CD4-positive, alpha-beta memory T cell (primary cell): ENCODE measurements at regions of chr22 and their contacts with region 1.

Region 1: DNA sequence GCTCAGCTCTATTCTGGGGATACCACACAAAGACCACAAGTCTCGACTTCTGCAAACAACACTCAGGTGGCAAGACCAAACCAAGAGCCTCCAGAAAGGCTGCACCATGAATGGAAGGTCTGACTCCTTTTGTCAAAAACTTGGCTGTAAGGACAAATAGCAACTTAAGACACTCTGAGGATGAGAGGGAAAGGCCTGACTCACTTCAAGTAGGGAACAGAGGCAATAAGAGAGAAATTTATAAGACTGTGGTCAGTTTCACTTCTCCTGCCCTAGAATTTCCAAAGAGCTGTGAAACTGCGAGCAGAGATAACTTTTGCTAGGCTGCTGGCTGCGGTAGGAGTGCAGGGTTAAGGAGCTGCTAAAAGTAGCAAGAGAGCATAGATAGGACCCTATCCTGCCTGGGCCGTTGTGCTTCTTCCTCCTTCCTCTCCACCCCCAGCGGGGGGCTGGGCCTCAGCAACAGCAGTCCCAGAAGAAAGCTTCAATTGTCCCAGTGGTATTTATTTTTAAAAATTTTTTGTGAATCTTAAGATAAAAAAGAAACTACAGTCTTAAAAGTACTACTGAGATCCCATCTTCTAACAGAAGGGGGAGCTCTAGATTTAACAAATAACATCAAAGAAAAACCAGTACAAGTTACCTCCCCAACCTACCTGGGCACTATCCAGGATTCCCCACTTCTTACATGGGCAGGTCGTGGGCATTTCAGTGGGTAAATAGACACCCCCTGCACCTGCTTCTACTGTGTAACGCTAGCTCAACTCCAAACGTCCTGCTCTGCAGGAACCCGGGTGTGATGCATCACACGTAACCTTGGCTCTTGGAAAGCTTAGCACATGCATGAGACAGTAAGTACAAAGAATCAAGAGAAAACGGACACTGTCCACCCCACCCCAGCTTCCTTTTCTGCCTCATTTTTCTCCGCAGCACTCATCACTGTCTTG is 66.4 kb downstream of the SGSM3 start:
- DNase-seq: peak in 4 of 5 donors; percentile 60 to 66 (median 62)
- H3K4me3 ChIP-seq: no peak overlapping the region
- H3K4me3 Mint-ChIP-seq: peak overlapping the region in 2 of 8 donors; percentile 17 to 37
- H3K27ac ChIP-seq: no peak overlapping the region
- H3K27ac Mint-ChIP-seq: peak overlapping the region; percentile 43 to 71 (median 53)
- H3K4me1 ChIP-seq: peaks cover 23% of the 10 kb centered on the region
- H3K4me1 Mint-ChIP-seq: peaks cover 34 to 46% (median 41%) of the 10 kb centered on the region in 4 donors
- H3K27me3 ChIP-seq: no peaks in the 10 kb centered on the region
- H3K27me3 Mint-ChIP-seq: no peaks in the 10 kb centered on the region

Region 2: DNA sequence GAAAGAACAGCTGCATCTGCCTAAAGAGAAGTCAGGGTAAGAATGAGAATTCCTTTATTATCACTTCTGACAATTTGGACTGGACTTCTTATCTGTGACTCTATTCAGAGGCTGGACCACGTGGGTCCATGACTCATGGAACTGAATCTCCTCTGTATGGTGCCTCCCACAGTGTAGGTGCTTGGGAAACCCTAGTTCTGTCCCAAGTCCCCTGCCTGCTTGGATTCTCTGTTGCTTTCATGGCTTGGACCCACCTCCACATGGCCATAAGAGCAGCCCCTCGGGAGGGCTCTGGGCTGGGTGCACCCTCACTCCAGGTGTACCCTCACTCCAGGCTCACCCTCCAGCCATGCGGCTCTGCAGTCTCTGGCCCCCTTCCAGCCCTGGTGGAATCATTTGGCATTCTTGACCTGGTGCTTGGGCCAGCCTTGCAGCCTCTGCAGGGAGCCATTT is 712.9 kb before region 1 on chr22:
- CTCF ChIA-PET with region 1: no interaction called
- POLR2A ChIA-PET with region 1: no interaction called
- intact Hi-C with region 1: no loop called
- DNase-seq: no peak
- H3K4me3 ChIP-seq: no peak overlapping the region
- H3K4me3 Mint-ChIP-seq: no peak overlapping the region
- H3K27ac ChIP-seq: no peak overlapping the region
- H3K27ac Mint-ChIP-seq: no peak overlapping the region
- H3K4me1 ChIP-seq: no peaks in the 10 kb centered on the region
- H3K4me1 Mint-ChIP-seq: peaks cover 0 to 2% (median 0%) of the 10 kb centered on the region in 4 donors
- H3K27me3 ChIP-seq: no peaks in the 10 kb centered on the region
- H3K27me3 Mint-ChIP-seq: peaks cover 0 to 2% of the 10 kb centered on the region in 2 donors

Region 3: GRCh38 chr22:40426594-40427333 is 10.0 kb before region 1 on chr22:
- CTCF ChIA-PET with region 1: interaction called, 11 read pairs
- POLR2A ChIA-PET with region 1: no interaction called
- intact Hi-C with region 1: no loop called
- DNase-seq: no peak
- H3K4me3 ChIP-seq: no peak overlapping the region
- H3K4me3 Mint-ChIP-seq: no peak overlapping the region
- H3K27ac ChIP-seq: no peak overlapping the region
- H3K27ac Mint-ChIP-seq: peak overlapping the region in 6 of 7 donors; percentile 53 to 88 (median 72)
- H3K4me1 ChIP-seq: no peaks in the 10 kb centered on the region
- H3K4me1 Mint-ChIP-seq: peaks cover 9 to 22% (median 15%) of the 10 kb centered on the region in 4 donors
- H3K27me3 ChIP-seq: no peaks in the 10 kb centered on the region
- H3K27me3 Mint-ChIP-seq: no peaks in the 10 kb centered on the region

Region 4: DNA sequence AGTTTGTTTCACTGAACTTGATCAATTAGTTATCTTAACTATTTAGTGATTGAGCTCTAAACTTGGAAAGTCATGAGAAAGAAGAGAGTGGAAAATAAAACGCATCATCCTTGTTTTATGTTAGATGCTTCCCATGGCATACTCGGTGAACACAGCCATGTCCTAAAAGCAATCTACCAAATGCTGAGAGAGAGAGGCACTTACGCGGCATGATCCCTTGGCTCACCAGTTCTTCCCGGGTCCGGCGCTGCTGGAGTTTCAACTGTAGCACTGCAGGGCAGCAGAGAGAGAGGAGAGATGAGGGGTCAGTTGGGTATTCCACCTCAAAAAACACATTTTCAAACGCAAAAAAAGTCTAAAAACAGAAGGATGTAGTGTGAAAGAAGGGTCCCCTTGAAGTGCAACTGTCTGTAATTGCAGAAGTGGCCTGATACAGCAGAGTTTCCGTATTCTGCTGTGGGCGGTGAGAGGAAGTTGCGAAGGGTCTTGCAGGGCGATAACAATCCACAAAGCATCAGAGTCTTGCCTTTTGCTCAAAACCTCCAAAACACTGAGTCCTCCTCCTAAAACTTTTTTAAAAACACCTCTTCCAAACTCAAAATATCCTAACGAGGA is 26.3 kb after region 1 on chr22:
- CTCF ChIA-PET with region 1: interaction called, 30 read pairs
- POLR2A ChIA-PET with region 1: interaction called, 8 read pairs
- intact Hi-C with region 1: loop called (anchors 2 kb)
- DNase-seq: peak; percentile 36 to 58 (median 47)
- H3K4me3 ChIP-seq: peak overlapping the region; percentile 59 to 75
- H3K4me3 Mint-ChIP-seq: peak overlapping the region; percentile 78 to 99 (median 98)
- H3K27ac ChIP-seq: peak overlapping the region; percentile 64
- H3K27ac Mint-ChIP-seq: peak overlapping the region; percentile 89 to 95 (median 93)
- H3K4me1 ChIP-seq: peaks cover 57% of the 10 kb centered on the region
- H3K4me1 Mint-ChIP-seq: peaks cover 48 to 70% (median 61%) of the 10 kb centered on the region in 4 donors
- H3K27me3 ChIP-seq: no peaks in the 10 kb centered on the region
- H3K27me3 Mint-ChIP-seq: no peaks in the 10 kb centered on the region

Region 5: DNA sequence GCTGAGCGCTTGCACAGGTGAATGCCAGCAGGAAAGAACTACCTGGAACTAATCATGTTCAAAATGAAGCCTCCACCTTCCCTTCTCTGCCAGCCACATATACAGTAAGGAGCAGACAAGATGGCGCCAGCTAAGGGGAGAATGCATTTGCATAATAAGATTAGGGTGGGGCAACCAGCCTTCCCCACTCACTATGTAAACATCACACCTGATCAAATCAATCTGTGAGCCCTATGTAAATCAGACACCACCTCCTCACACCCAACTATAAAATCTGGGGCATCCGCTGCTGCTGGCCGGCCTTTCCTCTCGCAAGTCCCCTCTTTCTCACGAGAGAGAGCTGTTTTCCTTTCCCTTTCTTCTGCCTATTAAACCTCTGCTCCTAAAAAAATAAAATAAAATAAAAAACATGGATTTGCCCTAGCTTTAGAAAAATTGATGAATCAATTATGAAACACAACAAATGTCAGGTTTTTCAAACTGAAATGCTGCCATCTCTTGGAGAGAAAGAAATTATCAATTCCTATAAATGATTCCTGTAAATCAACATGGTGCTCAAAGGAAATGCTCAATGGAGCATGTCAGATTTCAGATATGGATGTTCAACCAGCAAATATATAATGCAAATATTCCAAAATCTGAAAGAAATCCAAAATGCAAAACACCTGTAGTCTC is 42.5 kb after region 1 on chr22:
- CTCF ChIA-PET with region 1: interaction called, 338 read pairs
- POLR2A ChIA-PET with region 1: interaction called, 4 read pairs
- intact Hi-C with region 1: loop called (anchors 2 kb)
- DNase-seq: no peak
- H3K4me3 ChIP-seq: no peak overlapping the region
- H3K4me3 Mint-ChIP-seq: no peak overlapping the region
- H3K27ac ChIP-seq: no peak overlapping the region
- H3K27ac Mint-ChIP-seq: no peak overlapping the region
- H3K4me1 ChIP-seq: peaks cover 28% of the 10 kb centered on the region
- H3K4me1 Mint-ChIP-seq: peaks cover 14 to 39% (median 24%) of the 10 kb centered on the region in 4 donors
- H3K27me3 ChIP-seq: no peaks in the 10 kb centered on the region
- H3K27me3 Mint-ChIP-seq: no peaks in the 10 kb centered on the region

Region 6: GRCh38 chr22:40525249-40525884 is 88.6 kb after region 1 on chr22:
- CTCF ChIA-PET with region 1: interaction called, 28 read pairs
- POLR2A ChIA-PET with region 1: interaction called, 3 read pairs
- intact Hi-C with region 1: loop called (anchors 5 kb)
- DNase-seq: peak; percentile 68 to 73 (median 69)
- H3K4me3 ChIP-seq: no peak overlapping the region
- H3K4me3 Mint-ChIP-seq: no peak overlapping the region
- H3K27ac ChIP-seq: no peak overlapping the region
- H3K27ac Mint-ChIP-seq: peak overlapping the region in 5 of 7 donors; percentile 16 to 87 (median 63)
- H3K4me1 ChIP-seq: peaks cover 22% of the 10 kb centered on the region
- H3K4me1 Mint-ChIP-seq: peaks cover 23 to 46% (median 31%) of the 10 kb centered on the region in 4 donors
- H3K27me3 ChIP-seq: no peaks in the 10 kb centered on the region
- H3K27me3 Mint-ChIP-seq: no peaks in the 10 kb centered on the region

Region 7: DNA sequence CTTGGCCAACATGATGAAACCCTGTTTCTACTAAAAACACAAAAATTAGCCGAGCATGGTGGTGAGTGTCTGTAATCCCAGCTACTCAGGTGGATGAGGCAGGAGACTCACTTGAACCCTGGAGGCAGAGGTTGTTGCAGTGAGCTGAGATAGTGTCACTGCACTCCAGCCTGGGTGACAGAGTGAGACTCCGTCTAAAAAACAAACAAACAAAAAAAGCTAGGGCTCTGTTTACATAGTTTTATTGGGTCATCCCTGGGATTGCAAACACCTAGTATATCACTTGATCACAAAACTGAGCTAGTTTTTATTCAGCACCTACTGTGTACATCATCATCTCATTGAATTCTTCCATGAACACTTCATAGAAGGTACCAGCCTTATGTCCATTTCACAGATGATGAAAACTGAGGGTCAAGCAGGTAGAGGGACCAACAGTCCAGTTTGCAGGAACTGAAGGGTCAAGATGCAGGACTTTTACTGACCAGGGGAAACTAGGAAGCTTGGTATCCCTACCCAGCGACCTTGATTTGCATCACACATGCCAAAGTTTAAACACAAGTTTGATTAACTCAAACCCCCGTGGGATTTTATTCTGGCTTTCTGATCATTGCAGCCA is 208.9 kb after region 1 on chr22:
- CTCF ChIA-PET with region 1: interaction called, 152 read pairs
- POLR2A ChIA-PET with region 1: interaction called, 4 read pairs
- intact Hi-C with region 1: loop called (anchors 1 kb)
- DNase-seq: no peak
- H3K4me3 ChIP-seq: no peak overlapping the region
- H3K4me3 Mint-ChIP-seq: peak overlapping the region in 1 of 8 donors; percentile 65
- H3K27ac ChIP-seq: no peak overlapping the region
- H3K27ac Mint-ChIP-seq: peak overlapping the region in 1 of 7 donors; percentile 27
- H3K4me1 ChIP-seq: peaks cover 7% of the 10 kb centered on the region
- H3K4me1 Mint-ChIP-seq: peaks cover 6 to 12% (median 7%) of the 10 kb centered on the region in 4 donors
- H3K27me3 ChIP-seq: no peaks in the 10 kb centered on the region
- H3K27me3 Mint-ChIP-seq: no peaks in the 10 kb centered on the region